Activated CD8-positive, alpha-beta memory T cell treated with anti-CD3 and anti-CD28 coated beads, Interleukin-2, amount 10 ng/mL, durations not matched to agents 7 days and 5 days (primary cell): ENCODE measurements at regions of chr12 and their contacts with region 1.

Region 1: GRCh38 chr12:56278905-56279304 is 12.2 kb downstream of the COQ10A start:
- DNase-seq: no peak
- ATAC-seq: no peak
- H3K4me3 Mint-ChIP-seq: no peak overlapping the region
- H3K27ac Mint-ChIP-seq: no peak overlapping the region
- H3K4me1 Mint-ChIP-seq: no peaks in the 10 kb centered on the region
- H3K27me3 Mint-ChIP-seq: no peaks in the 10 kb centered on the region

Region 2: DNA sequence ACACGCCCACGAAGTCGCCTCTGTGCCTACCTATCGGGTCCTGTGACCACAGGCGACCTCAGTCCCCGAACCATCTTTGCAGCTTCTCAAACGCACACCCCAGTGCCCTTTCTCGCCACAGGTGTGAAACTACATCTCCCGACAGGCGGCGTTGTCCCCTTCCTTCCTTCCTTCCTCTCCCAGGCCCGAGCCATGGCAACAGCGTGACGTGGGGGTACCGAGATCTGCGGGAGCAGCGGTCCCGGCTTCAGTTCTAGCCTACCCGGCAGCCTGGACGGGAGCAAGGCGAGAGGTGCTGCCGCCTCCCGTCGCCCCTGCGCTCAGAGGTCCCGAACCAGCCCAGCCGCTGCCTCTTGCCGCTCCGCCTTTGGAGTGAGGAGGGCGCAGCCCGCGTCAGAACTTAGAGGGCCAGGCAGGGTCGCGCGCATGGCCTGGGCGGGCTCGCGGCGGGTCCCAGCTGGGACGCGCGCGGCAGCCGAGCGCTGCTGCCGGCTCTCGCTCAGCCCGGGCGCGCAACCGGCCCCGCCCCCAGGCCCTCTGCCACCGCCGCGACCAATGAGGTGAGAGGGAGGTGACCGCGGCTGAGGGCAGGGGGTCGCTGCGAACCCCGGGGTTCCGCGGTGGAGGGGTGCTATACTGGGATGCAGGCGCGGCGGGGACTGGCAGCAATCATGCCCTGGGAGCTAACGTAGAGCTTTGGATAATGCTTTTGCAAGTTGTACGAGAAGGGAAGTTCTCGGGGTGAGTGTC is 12.0 kb before region 1 on chr12 and contains the start of gene COQ10A:
- CTCF ChIA-PET with region 1: interaction called, 11 read pairs
- DNase-seq: peak; percentile 93
- ATAC-seq: peak; percentile 94
- H3K4me3 Mint-ChIP-seq: peak within 1 kb of the TSS; percentile 85
- H3K27ac Mint-ChIP-seq: peak within 1 kb of the TSS; percentile 89
- H3K4me1 Mint-ChIP-seq: peaks cover 19% of the 10 kb centered on the region
- H3K27me3 Mint-ChIP-seq: no peaks in the 10 kb centered on the region
- total RNA-seq, gene COQ10A: 16.0 to 17.4 TPM